ENCODE measurements at regions of chr6 and their contacts with region 1.

Region 1: GRCh38 chr6:143745166-143746133 is 67.7 kb downstream of the PHACTR2 start:
- DNase-seq: peak; percentile 100
- ATAC-seq: peak; percentile 94
- H3K4me3 ChIP-seq: peak overlapping the region; percentile 56 to 74 (median 57)
- H3K27ac ChIP-seq: peak overlapping the region; percentile 98
- H3K4me1 ChIP-seq: peaks cover 70% of the 10 kb centered on the region
- H3K27me3 ChIP-seq: no peaks in the 10 kb centered on the region
- CTCF ChIP-seq: no peak
- EP300 ChIP-seq: peak; percentile 93
- POLR2A ChIP-seq: peak in 1 of 2 experiments; percentile 90; a peak in 2 of 4 replicates
- RAD21 ChIP-seq: peak; percentile 61; the same call in 1 of the 2 replicates

Region 2: GRCh38 chr6:143592335-143592734 is 153.1 kb before region 1 on chr6:
- CTCF ChIA-PET with region 1: no interaction called
- POLR2A ChIA-PET with region 1: no interaction called
- in situ Hi-C with region 1: no loop called
- intact Hi-C with region 1: loop called (anchors 5 kb)
- DNase-seq: peak; percentile 23
- ATAC-seq: peak; percentile 68
- H3K4me3 ChIP-seq: no peak overlapping the region
- H3K27ac ChIP-seq: no peak overlapping the region
- H3K4me1 ChIP-seq: no peaks in the 10 kb centered on the region
- H3K27me3 ChIP-seq: no peaks in the 10 kb centered on the region
- CTCF ChIP-seq: peak; percentile 62
- EP300 ChIP-seq: no peak
- POLR2A ChIP-seq: no peak
- RAD21 ChIP-seq: no peak

Region 3: DNA sequence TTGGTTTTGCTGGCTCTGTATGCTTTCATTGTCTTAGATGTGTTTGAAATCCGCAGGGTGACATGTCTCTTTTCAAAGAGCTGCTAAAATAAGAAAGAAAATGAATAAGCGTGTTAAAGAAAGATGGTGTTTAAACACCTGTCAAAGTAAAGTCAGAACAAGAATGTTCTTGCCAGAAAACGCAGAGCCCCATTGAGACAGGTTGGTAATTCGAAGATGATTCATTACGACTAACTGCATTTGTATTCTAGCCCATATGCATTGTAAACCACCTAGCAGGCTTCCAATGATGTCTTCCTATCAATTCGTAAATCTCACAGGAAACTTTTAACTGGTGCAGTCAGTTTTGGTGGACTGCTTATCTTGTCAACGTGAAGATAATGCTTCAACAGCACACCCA is 50.9 kb before region 1 on chr6:
- CTCF ChIA-PET with region 1: no interaction called
- POLR2A ChIA-PET with region 1: interaction called, 31 read pairs
- in situ Hi-C with region 1: loop called (anchors 5 kb)
- intact Hi-C with region 1: loop called (anchors 2 kb)
- DNase-seq: no peak
- ATAC-seq: no peak
- H3K4me3 ChIP-seq: no peak overlapping the region
- H3K27ac ChIP-seq: no peak overlapping the region
- H3K4me1 ChIP-seq: peaks cover 95% of the 10 kb centered on the region
- H3K27me3 ChIP-seq: no peaks in the 10 kb centered on the region
- CTCF ChIP-seq: no peak
- EP300 ChIP-seq: no peak
- POLR2A ChIP-seq: no peak
- RAD21 ChIP-seq: no peak

Region 4: GRCh38 chr6:143842902-143843676 is 97.6 kb after region 1 on chr6 and contains the start of gene LTV1:
- CTCF ChIA-PET with region 1: no interaction called
- POLR2A ChIA-PET with region 1: interaction called, 48 read pairs
- in situ Hi-C with region 1: no loop called
- intact Hi-C with region 1: loop called (anchors 1 kb)
- DNase-seq: peak; percentile 98
- ATAC-seq: peak; percentile 97
- H3K4me3 ChIP-seq: peak within 1 kb of the TSS; percentile 75 to 88 (median 85)
- H3K27ac ChIP-seq: peak within 1 kb of the TSS; percentile 95
- H3K4me1 ChIP-seq: peaks cover 39% of the 10 kb centered on the region
- H3K27me3 ChIP-seq: no peaks in the 10 kb centered on the region; a peak in 1 of 5 replicates
- CTCF ChIP-seq: peak; percentile 40
- EP300 ChIP-seq: no peak; a peak in 2 of 4 replicates
- POLR2A ChIP-seq: peak; percentile 88 to 94
- RAD21 ChIP-seq: peak; percentile 71
- total RNA-seq, gene LTV1: 85.8 and 122 TPM in 2 replicates